ENCODE measurements at regions of chr1 and their contacts with region 1.

Region 1: GRCh38 chr1:89552471-89553081 is 27.9 kb downstream of the LRRC8B start:
- DNase-seq: peak in 2 of 3 donors; percentile 55 to 69
- H3K4me3 ChIP-seq: peak overlapping the region in 5 of 7 experiments; percentile 4 to 58 (median 30)
- H3K27ac ChIP-seq: peak overlapping the region; percentile 55 to 75
- H3K4me1 ChIP-seq: peaks cover 9 to 38% (median 24%) of the 10 kb centered on the region in 4 experiments
- H3K27me3 ChIP-seq: no peaks in the 10 kb centered on the region

Region 2: DNA sequence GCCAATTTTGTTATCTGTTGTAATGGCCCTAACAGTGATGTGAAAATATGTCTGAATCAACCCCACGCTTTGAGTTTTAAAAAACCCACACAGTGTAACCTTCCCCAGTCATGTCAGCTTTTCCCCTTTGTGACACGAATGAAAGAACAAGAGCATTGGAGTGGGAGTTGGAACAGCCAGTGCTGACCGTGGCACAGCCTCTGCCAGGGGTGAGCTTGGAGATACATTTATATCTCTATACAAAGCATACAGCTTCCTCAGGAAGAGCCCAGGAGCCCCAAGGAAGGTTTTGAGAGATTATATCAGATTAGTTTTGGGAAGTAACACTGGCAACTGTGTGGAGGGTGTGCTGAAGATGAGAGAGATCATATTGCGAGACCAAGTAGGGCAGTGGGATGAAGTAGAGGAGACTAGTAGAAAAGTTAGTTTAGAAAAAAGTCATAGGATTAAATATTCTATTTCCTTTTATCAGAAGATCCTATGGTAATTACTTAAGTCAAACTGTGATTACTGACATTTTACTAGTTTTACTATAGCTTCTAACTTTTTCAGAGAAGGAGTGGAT is 12.1 kb before region 1 on chr1:
- CTCF ChIA-PET with region 1: interaction called, 11 read pairs
- POLR2A ChIA-PET with region 1: no interaction called
- DNase-seq: peak in 2 of 3 donors; percentile 23 to 36
- H3K4me3 ChIP-seq: peak overlapping the region in 5 of 7 experiments; percentile 1 to 30 (median 10)
- H3K27ac ChIP-seq: peak overlapping the region in 1 of 2 experiments; percentile 76
- H3K4me1 ChIP-seq: peaks cover 28 to 60% (median 48%) of the 10 kb centered on the region in 4 experiments
- H3K27me3 ChIP-seq: no peaks in the 10 kb centered on the region

Region 3: DNA sequence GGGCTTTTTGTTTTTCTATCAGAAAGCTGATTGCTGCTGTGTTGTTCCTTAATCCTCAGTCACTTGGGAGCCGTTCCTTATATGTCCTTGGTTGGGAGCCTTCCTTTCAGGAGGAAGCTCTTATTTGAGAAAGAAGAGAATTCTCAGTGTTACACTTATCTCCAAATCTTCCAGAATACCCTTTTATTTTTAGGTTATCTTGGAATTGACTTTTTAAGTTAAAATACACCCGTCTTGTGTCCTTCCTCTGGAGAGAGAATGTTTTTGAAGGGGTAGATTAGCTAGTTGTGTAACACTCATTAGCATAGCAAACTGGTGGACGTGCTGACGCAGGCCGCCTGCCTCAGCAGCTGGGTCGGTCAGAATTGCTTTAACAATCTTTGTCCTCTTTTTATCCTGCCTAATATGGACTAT is 14.2 kb after region 1 on chr1:
- CTCF ChIA-PET with region 1: interaction called, 10 read pairs
- POLR2A ChIA-PET with region 1: interaction called, 3 read pairs
- DNase-seq: peak; percentile 28 to 79 (median 67)
- H3K4me3 ChIP-seq: peak overlapping the region in 2 of 7 experiments; percentile 9 to 54
- H3K27ac ChIP-seq: peak overlapping the region; percentile 41 to 69
- H3K4me1 ChIP-seq: peaks cover 4 to 23% (median 6%) of the 10 kb centered on the region in 4 experiments
- H3K27me3 ChIP-seq: no peaks in the 10 kb centered on the region

Region 4: DNA sequence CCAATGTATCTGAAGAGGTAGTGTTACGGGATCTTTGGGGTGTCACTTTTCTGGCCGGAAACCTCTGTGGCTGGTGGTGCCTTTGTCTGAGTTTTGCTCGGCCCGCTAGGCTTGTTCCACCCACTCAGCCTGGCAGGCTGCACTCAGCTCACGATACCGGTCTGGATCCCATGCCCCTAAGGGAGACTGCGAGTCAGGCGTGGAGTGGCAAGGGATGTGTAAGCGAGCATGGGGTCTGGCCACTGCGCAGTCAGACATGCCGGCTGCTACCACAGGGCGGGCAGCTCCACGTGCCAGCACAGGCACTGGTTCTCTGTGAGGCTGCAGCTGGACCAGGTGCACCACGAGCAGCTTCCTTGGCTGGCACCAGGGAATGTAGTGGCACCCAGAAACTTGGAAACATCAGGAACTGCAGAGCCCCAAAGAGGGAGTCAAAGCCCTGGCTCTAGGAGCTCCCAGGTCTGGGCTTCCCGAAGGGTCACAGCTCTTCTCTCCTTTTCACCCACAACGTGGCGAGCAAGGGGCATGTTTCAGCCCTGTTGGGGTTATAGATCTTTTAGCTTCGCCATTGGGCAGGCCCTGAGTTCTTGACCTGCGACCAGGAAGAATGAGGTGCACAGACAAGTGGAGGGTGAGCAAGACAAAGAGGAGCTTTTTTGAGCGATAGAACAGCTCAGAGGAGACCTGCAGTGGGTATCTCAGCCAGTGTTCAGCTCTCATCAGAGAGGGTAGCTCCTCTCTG is 56.6 kb after region 1 on chr1:
- CTCF ChIA-PET with region 1: no interaction called
- POLR2A ChIA-PET with region 1: no interaction called
- DNase-seq: no peak
- H3K4me3 ChIP-seq: no peak overlapping the region
- H3K27ac ChIP-seq: no peak overlapping the region
- H3K4me1 ChIP-seq: no peaks in the 10 kb centered on the region
- H3K27me3 ChIP-seq: no peaks in the 10 kb centered on the region

Region 5: GRCh38 chr1:89706700-89707012 is 154.1 kb after region 1 on chr1:
- CTCF ChIA-PET with region 1: no interaction called
- POLR2A ChIA-PET with region 1: no interaction called
- DNase-seq: peak; percentile 25 to 76 (median 75)
- H3K4me3 ChIP-seq: no peak overlapping the region
- H3K27ac ChIP-seq: no peak overlapping the region
- H3K4me1 ChIP-seq: peaks cover 0 to 31% (median 11%) of the 10 kb centered on the region in 4 experiments
- H3K27me3 ChIP-seq: no peaks in the 10 kb centered on the region